ENCODE measurements at regions of chr1 and their contacts with region 1.

Region 1: DNA sequence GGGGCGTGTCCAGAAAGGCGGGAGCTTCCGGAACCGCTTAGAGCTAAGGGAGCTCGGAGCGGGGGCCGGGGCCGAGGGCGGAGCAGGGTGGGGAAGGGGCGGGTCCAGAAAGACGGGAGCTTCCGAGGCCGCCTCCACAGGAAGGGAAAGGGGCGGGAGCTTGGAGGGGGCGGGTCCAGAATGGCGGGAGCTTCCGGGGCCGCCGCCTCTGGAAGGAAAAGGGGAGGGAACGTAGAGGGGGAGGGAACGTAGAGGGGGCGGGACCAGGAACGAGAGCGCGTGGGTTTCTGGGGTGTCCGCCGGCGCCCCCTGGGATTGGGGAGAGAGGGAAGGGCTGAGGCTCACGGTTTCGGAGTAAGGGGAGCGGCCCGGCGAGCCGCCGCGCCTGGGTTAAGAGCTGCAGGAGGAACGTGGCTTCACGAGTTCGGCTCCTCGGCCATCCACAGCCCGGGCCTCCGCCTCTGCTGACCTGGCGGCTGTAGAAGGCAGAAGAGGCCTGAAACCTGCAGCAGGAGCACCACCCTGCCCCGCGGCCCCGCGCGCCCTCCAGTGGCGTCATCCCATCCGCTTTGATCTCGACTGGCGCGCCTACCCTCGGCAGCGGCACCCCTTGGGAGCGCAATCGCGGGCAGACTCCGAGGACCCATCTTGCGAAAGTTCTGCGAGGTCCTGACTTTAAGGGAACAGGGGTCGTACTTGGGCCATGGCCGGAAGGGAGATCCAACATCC is 22.9 kb upstream of the HPDL start:
- DNase-seq: peak; percentile 84
- ATAC-seq: peak; percentile 86
- H3K4me3 ChIP-seq: peak overlapping the region; percentile 90
- H3K27ac ChIP-seq: peak overlapping the region; percentile 95
- H3K4me1 ChIP-seq: peaks cover 18% of the 10 kb centered on the region
- H3K27me3 ChIP-seq: no peaks in the 10 kb centered on the region
- CTCF ChIP-seq: peak; percentile 65 to 75 (median 68)
- EP300 ChIP-seq: no peak
- POLR2A ChIP-seq: peak; percentile 95
- RAD21 ChIP-seq: peak; percentile 51

Region 2: DNA sequence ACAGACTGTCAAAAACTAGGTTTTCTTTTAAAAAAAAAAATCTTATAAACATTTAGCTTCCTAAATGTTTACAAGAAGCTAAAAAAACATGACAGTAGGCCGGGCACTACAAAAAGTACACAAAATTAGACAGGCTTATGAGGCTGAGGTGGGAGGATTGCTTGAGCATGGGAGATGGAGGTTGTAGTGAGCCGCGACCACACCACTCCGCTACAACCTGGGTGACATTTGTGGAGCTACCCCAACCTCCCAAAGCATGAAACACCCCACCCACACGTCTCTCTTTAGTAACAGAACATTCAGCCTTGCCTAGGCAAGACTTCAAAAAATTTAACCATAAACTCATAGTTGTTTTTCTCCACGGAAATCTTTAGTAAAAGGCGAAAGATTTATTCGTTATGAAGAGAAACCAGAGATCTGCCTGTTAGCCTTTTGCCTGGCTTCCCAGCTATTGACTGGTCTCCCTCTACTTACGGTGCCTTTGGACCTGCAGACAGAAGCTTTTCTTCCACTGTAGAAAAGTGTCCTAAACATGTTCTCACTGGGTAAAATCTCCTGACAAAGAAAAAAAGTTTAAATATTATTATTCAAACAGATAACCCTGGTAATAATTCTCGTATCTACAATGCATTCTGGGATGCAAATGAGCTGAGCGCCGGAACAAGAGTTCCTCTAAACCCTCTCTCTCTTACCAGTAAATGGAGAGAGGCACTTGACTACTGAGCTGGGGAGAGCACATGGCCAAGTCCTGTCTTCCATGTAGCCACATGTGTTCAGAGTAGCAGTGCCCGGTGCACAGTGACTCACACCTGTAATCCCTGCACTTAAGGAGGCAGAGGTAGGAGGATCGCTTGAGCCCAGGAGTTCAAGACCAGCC is 582.0 kb before region 1 on chr1:
- CTCF ChIA-PET with region 1: interaction called, 3 read pairs
- POLR2A ChIA-PET with region 1: interaction called, 6 read pairs
- RAD21 ChIA-PET with region 1: interaction called, 4 read pairs
- SMC1A ChIA-PET with region 1: interaction called, 5 read pairs
- in situ Hi-C with region 1: loop called (anchors 5 kb)
- intact Hi-C with region 1: loop called (anchors 5 kb)
- DNase-seq: peak; percentile 99
- ATAC-seq: peak; percentile 91
- H3K4me3 ChIP-seq: no peak overlapping the region
- H3K27ac ChIP-seq: peak overlapping the region; percentile 99
- H3K4me1 ChIP-seq: peaks cover 49% of the 10 kb centered on the region
- H3K27me3 ChIP-seq: no peaks in the 10 kb centered on the region
- CTCF ChIP-seq: peak in 1 of 3 experiments; percentile 16; a peak in 1 of 6 replicates
- EP300 ChIP-seq: no peak
- POLR2A ChIP-seq: peak; percentile 97
- RAD21 ChIP-seq: peak; percentile 18; the same call in 1 of the 2 replicates

Region 3: DNA sequence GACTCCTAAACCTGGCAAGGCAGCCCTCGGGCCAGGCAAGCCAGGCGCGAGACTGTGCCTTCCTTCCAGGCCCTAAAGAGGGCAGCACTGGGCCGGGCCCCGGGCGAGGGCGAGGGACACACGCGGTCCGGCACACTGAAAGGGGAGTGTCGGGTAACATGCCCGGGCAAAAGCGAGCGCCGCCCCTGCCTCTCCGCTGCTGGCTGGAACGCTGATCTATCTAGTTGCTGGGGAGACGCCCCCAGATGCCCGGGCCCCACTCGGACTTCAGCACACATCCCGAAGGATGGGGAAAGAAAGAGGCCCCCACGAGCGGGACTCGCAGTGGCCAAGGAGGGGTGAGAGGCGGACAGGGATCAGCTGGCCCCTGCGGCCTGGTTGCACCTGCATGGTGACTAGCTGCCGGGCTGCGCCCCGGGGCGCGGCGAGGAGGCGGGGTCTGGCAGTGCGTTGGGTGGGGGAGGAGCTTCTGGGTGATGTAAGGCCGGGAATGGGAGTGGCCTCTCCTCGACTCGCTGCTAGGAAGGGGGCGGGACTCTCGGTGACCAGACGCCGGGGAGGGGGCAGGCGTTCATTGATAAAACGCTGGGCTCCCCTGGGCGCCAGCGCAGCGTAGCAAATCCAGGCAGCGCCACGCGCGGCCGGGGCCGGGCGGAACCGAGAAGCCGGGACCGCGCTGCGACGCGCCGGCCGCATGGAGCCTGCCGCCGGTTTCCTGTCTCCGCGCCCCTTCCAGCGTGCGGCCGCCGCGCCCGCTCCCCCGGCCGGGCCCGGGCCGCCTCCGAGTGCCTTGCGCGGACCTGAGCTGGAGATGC is 503.8 kb before region 1 on chr1 and contains the start of gene PLK3:
- CTCF ChIA-PET with region 1: interaction called, 5 read pairs
- POLR2A ChIA-PET with region 1: interaction called, 4 read pairs
- RAD21 ChIA-PET with region 1: interaction called, 13 read pairs
- SMC1A ChIA-PET with region 1: interaction called, 4 read pairs
- in situ Hi-C with region 1: no loop called
- intact Hi-C with region 1: no loop called
- DNase-seq: peak; percentile 91
- ATAC-seq: peak; percentile 91
- H3K4me3 ChIP-seq: peak within 1 kb of the TSS; percentile 94
- H3K27ac ChIP-seq: peak within 1 kb of the TSS; percentile 84
- H3K4me1 ChIP-seq: peaks cover 11% of the 10 kb centered on the region
- H3K27me3 ChIP-seq: no peaks in the 10 kb centered on the region
- CTCF ChIP-seq: peak; percentile 92 to 97 (median 95)
- EP300 ChIP-seq: no peak
- POLR2A ChIP-seq: peak; percentile 90
- RAD21 ChIP-seq: peak; percentile 86
- polyA plus RNA-seq, gene PLK3: 1.5 to 1.9 TPM

Region 4: DNA sequence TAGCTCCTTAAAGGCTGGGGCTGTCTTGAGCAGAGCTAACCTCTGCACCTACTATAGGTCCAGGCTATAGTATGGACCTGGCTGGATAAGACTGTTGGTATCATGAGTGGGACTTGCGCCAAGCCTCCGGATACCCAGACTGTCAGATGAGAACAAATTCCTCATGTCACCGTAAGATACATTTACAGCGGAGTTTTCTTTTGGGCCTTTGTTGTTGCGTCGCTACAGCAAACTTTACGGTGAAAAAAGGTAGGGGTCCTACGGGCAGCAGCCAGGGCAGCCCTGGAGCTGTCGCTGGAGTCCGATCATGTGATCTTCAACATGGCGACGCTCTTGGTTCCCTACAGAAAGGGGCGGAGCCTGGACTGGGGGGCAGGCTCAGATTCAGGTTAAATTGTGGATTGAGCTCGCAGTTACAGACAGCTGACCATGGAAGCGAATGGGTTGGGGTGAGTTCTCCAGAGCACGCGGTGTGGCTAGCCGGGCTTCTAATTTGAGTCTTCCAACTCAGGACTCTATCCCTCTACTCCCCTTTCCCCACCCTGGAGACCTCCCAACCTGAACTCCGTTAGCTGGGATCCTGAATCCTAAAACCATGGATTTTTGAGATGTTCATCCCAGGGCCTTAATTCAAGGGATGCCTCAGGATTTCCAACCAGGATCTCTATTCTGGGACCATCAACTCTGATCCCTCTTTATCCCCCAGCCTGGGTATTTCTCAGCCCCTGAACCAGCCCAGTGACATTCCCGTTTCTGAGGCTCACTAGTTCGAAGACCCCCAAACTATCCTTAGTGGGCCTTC is 291.7 kb before region 1 on chr1 and contains the start of gene UROD:
- CTCF ChIA-PET with region 1: interaction called, 252 read pairs
- POLR2A ChIA-PET with region 1: interaction called, 26 read pairs
- RAD21 ChIA-PET with region 1: interaction called, 313 read pairs
- SMC1A ChIA-PET with region 1: interaction called, 284 read pairs
- in situ Hi-C with region 1: loop called (anchors 5 kb)
- intact Hi-C with region 1: loop called (anchors 1 kb)
- DNase-seq: peak; percentile 90
- ATAC-seq: peak; percentile 83
- H3K4me3 ChIP-seq: peak within 1 kb of the TSS; percentile 90
- H3K27ac ChIP-seq: peak within 1 kb of the TSS; percentile 79
- H3K4me1 ChIP-seq: peaks cover 17% of the 10 kb centered on the region
- H3K27me3 ChIP-seq: no peaks in the 10 kb centered on the region
- CTCF ChIP-seq: no peak
- EP300 ChIP-seq: peak in 1 of 2 experiments; percentile 73; a peak in 2 of 4 replicates
- POLR2A ChIP-seq: peak; percentile 86
- RAD21 ChIP-seq: no peak
- polyA plus RNA-seq, gene UROD: 236 to 330 TPM

Region 5: GRCh38 chr1:45326627-45327623 is 23.2 kb after region 1 on chr1 and contains the start of gene HPDL:
- CTCF ChIA-PET with region 1: interaction called, 8 read pairs
- POLR2A ChIA-PET with region 1: interaction called, 7 read pairs
- RAD21 ChIA-PET with region 1: interaction called, 17 read pairs
- SMC1A ChIA-PET with region 1: interaction called, 57 read pairs
- in situ Hi-C with region 1: no loop called
- intact Hi-C with region 1: loop called (anchors 1 kb)
- DNase-seq: no peak
- ATAC-seq: peak; percentile 89
- H3K4me3 ChIP-seq: peak within 1 kb of the TSS; percentile 82
- H3K27ac ChIP-seq: peak within 1 kb of the TSS; percentile 80
- H3K4me1 ChIP-seq: peaks cover 16% of the 10 kb centered on the region; the same call in 1 of the 2 replicates
- H3K27me3 ChIP-seq: no peaks in the 10 kb centered on the region
- CTCF ChIP-seq: 0 out of 6 replicates have a peak, but pooled peaks of 1 of the 3 experiments have one; percentile 5
- EP300 ChIP-seq: no peak
- POLR2A ChIP-seq: peak; percentile 91
- RAD21 ChIP-seq: no peak
- polyA plus RNA-seq, gene HPDL: 1.3 to 3.6 TPM

Region 6: GRCh38 chr1:45490626-45491486 is 187.1 kb after region 1 on chr1 and contains the start of gene TESK2:
- CTCF ChIA-PET with region 1: interaction called, 153 read pairs
- POLR2A ChIA-PET with region 1: interaction called, 9 read pairs
- RAD21 ChIA-PET with region 1: interaction called, 146 read pairs
- SMC1A ChIA-PET with region 1: interaction called, 88 read pairs
- in situ Hi-C with region 1: no loop called
- intact Hi-C with region 1: loop called (anchors 1 kb)
- DNase-seq: peak; percentile 100
- ATAC-seq: peak; percentile 94
- H3K4me3 ChIP-seq: peak within 1 kb of the TSS; percentile 83
- H3K27ac ChIP-seq: peak within 1 kb of the TSS; percentile 32; the same call in 1 of the 2 replicates
- H3K4me1 ChIP-seq: peaks cover 4% of the 10 kb centered on the region; the same call in 1 of the 2 replicates
- H3K27me3 ChIP-seq: no peaks in the 10 kb centered on the region
- CTCF ChIP-seq: peak in 1 of 3 experiments; percentile 14; a peak in 1 of 6 replicates
- EP300 ChIP-seq: no peak
- POLR2A ChIP-seq: peak; percentile 88
- RAD21 ChIP-seq: no peak
- polyA plus RNA-seq, gene TESK2: 2.2 to 2.5 TPM